A549 (cell line): ENCODE measurements at regions of chr10 and their contacts with region 1.

Region 1: DNA sequence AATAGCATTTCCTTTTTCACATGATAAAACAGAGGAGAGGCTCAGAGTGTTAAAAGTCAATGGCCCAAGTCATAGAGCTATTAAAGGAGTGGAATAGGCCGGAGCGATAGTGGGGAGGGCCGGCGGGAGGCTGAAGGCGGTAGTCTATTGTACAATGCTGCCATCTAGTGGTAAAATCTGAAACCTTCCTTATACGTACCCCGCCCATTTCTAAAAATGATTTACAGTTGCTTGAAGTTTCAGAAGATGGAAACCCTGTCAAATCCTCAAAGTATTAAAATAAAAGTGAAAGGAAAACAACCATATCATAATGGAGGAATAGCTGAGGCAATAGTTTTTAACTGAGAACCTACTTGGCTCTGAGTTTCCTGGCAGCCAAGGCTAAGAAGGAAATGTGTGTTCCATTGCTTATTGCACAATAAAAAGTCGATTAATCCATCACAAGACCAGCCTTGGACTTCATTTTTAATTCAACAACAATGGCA is 209.1 kb downstream of the CCSER2 start:
- DNase-seq: peak; percentile 57 to 67
- ATAC-seq: peak; percentile 44 to 72; a peak in 5 of 6 replicates
- H3K4me3 ChIP-seq: no peak overlapping the region
- H3K27ac ChIP-seq: no peak overlapping the region
- H3K4me1 ChIP-seq: peaks cover 10% of the 10 kb centered on the region
- CTCF ChIP-seq: peak; percentile 92
- EP300 ChIP-seq: no peak
- POLR2A ChIP-seq: no peak
- RAD21 ChIP-seq: peak; percentile 93 to 95

Region 2: DNA sequence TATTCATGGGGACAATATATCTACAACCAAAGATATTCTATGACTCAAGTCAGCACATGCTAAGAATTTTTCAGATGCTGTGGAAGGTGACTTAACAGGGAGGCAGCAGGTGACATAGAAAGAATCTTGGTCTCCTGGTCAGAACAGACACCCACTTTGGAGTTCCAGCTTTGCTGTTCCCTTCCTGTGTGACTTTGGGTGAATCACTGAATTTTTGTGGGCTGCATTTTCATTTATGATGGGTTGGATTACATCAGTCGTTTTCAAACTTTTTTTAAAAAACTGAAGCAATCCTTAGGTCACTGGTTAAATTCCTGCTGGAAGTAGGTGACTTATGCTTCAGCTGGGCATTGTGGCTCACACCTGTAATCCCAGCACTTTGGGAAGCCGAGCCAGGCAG is 267.7 kb before region 1 on chr10:
- CTCF ChIA-PET with region 1: interaction called, 341 read pairs
- POLR2A ChIA-PET with region 1: no interaction called
- DNase-seq: no peak
- ATAC-seq: peak in 1 of 2 experiments; percentile 52; a peak in 1 of 6 replicates
- H3K4me3 ChIP-seq: no peak overlapping the region
- H3K27ac ChIP-seq: no peak overlapping the region
- H3K4me1 ChIP-seq: no peaks in the 10 kb centered on the region
- CTCF ChIP-seq: no peak
- EP300 ChIP-seq: peak in 1 of 2 experiments; percentile 24; a peak in 1 of 5 replicates
- POLR2A ChIP-seq: no peak
- RAD21 ChIP-seq: no peak

Region 3: GRCh38 chr10:84344526-84344925 is 193.0 kb before region 1 on chr10:
- CTCF ChIA-PET with region 1: interaction called, 11 read pairs
- POLR2A ChIA-PET with region 1: no interaction called
- DNase-seq: no peak
- ATAC-seq: no peak
- H3K4me3 ChIP-seq: no peak overlapping the region
- H3K27ac ChIP-seq: no peak overlapping the region
- H3K4me1 ChIP-seq: peaks cover 13% of the 10 kb centered on the region; the same call in 2 of the 3 replicates
- CTCF ChIP-seq: no peak
- EP300 ChIP-seq: no peak
- POLR2A ChIP-seq: no peak
- RAD21 ChIP-seq: no peak

Region 4: GRCh38 chr10:84375011-84375410 is 162.5 kb before region 1 on chr10:
- CTCF ChIA-PET with region 1: interaction called, 101 read pairs
- POLR2A ChIA-PET with region 1: interaction called, 3 read pairs
- DNase-seq: peak in 1 of 2 experiments; percentile 62
- ATAC-seq: peak; percentile 59 to 75; a peak in 3 of 6 replicates
- H3K4me3 ChIP-seq: no peak overlapping the region
- H3K27ac ChIP-seq: no peak overlapping the region
- H3K4me1 ChIP-seq: peaks cover 12% of the 10 kb centered on the region
- CTCF ChIP-seq: peak; percentile 83
- EP300 ChIP-seq: no peak
- POLR2A ChIP-seq: no peak
- RAD21 ChIP-seq: peak; percentile 82

Region 5: GRCh38 chr10:84429926-84430520 is 107.5 kb before region 1 on chr10:
- CTCF ChIA-PET with region 1: interaction called, 17 read pairs
- POLR2A ChIA-PET with region 1: no interaction called
- DNase-seq: peak; percentile 19 to 68
- ATAC-seq: peak; percentile 73 to 85
- H3K4me3 ChIP-seq: no peak overlapping the region
- H3K27ac ChIP-seq: no peak overlapping the region
- H3K4me1 ChIP-seq: peaks cover 6% of the 10 kb centered on the region; the same call in 2 of the 3 replicates
- CTCF ChIP-seq: peak; percentile 55
- EP300 ChIP-seq: no peak
- POLR2A ChIP-seq: no peak
- RAD21 ChIP-seq: peak; percentile 30 to 54; a peak in 4 of 5 replicates

Region 6: GRCh38 chr10:84590327-84591193 is 53.1 kb after region 1 on chr10:
- CTCF ChIA-PET with region 1: no interaction called
- POLR2A ChIA-PET with region 1: no interaction called
- DNase-seq: no peak
- ATAC-seq: no peak
- H3K4me3 ChIP-seq: no peak overlapping the region
- H3K27ac ChIP-seq: no peak overlapping the region
- H3K4me1 ChIP-seq: no peaks in the 10 kb centered on the region
- CTCF ChIP-seq: no peak
- EP300 ChIP-seq: no peak
- POLR2A ChIP-seq: no peak
- RAD21 ChIP-seq: no peak

Region 7: DNA sequence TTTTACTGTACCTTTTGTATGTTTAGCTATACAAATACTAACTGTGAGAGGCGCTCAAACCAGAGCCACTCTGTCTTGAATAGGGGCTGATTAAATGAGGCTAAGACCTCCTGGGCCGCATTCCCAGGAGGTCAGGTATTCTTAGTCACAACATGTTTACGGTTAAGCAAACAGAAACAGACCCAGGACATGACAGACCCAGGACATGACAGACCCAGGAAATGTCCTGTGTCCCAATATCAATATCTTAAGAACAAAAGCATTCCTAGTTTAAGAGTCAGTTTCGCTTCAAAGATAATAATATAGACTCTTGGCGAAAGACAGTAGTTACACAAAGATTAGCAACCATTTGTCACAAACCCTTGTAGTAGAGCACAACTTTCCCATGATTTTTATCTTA is 95.4 kb after region 1 on chr10:
- CTCF ChIA-PET with region 1: no interaction called
- POLR2A ChIA-PET with region 1: no interaction called
- DNase-seq: peak in 1 of 2 experiments; percentile 25
- ATAC-seq: peak; percentile 50; a peak in 4 of 6 replicates
- H3K4me3 ChIP-seq: no peak overlapping the region
- H3K27ac ChIP-seq: no peak overlapping the region
- H3K4me1 ChIP-seq: no peaks in the 10 kb centered on the region
- CTCF ChIP-seq: no peak
- EP300 ChIP-seq: no peak
- POLR2A ChIP-seq: no peak
- RAD21 ChIP-seq: no peak

Region 8: DNA sequence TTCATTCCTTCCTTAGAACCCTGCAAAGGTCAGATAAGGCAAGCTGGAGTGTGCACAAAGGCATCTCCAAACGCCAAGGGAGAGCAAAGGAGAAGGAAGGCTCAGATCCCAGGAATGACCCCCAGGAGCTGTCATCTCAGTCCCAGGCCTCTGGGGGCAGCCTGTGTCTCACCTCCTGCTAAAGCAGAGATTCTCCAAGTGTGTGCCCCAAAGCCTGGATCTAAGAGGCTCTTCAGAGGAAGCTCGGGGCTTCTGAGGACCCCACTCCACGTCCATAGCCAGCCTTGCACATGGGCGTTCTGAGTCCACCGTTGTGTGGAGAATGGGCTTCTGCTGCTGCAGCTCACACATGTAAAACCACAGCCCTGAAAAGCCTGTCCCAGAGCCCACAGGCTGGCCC is 1834.2 kb after region 1 on chr10:
- CTCF ChIA-PET with region 1: interaction called, 10 read pairs
- POLR2A ChIA-PET with region 1: no interaction called
- DNase-seq: peak in 1 of 2 experiments; percentile 49
- ATAC-seq: peak; percentile 57 to 71; a peak in 5 of 6 replicates
- H3K4me3 ChIP-seq: no peak overlapping the region
- H3K27ac ChIP-seq: no peak overlapping the region
- H3K4me1 ChIP-seq: no peaks in the 10 kb centered on the region; the same call in 2 of the 3 replicates
- CTCF ChIP-seq: no peak
- EP300 ChIP-seq: no peak
- POLR2A ChIP-seq: no peak
- RAD21 ChIP-seq: no peak